ENCODE measurements at regions of chr16 and their contacts with region 1.

Region 1: DNA sequence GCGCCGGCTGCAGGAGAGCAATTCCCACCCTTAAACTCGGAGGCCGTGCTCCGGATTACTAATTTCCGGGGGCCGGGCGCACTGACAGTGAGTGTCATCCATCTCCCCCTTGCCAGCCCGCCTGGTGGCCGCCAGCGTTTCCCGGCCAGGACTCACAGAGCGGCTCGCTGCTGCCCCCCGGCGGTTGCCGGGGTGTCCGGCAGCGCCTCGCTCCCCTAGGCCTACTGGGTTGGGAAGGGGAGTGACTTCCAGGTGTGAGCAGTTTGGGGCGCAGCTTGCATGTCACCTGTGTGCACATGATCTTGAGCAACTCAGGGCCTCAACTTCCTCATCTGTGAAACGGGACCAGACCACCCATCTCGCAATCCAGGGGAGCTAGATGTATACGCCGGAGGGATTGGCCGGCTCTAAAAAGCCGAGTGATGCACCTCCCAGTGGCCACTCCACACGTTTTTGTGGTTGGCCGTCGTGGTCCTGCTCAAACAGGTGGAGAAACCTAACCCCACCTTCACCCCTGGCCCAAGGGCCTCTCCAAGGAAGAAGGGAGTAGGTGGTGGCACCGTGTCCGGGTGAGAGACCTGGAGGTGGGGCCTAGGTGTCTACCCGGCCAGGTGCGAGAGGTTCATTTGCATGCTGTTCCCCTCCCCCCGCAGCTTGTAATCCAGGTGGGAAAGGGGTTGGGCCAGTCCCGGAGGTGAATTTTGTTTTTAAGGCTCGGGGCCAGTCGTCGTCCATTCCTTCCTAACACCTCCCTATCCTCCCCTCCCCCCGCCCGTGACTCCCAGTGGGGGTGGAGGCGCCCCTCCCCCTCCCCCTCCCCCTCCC is 2.4 kb upstream of the GSE1 start:
- DNase-seq: peak; percentile 83
- ATAC-seq: peak; percentile 49
- H3K4me3 ChIP-seq: peak overlapping the region; percentile 85 to 91
- H3K27ac ChIP-seq: peak overlapping the region; percentile 98
- H3K4me1 ChIP-seq: peaks cover 20 to 52% of the 10 kb centered on the region in 2 experiments
- H3K27me3 ChIP-seq: no peaks in the 10 kb centered on the region
- CTCF ChIP-seq: peak in 2 of 3 experiments; percentile 99 to 100; a peak in 4 of 6 replicates
- POLR2A ChIP-seq: no peak
- RAD21 ChIP-seq: no peak

Region 2: DNA sequence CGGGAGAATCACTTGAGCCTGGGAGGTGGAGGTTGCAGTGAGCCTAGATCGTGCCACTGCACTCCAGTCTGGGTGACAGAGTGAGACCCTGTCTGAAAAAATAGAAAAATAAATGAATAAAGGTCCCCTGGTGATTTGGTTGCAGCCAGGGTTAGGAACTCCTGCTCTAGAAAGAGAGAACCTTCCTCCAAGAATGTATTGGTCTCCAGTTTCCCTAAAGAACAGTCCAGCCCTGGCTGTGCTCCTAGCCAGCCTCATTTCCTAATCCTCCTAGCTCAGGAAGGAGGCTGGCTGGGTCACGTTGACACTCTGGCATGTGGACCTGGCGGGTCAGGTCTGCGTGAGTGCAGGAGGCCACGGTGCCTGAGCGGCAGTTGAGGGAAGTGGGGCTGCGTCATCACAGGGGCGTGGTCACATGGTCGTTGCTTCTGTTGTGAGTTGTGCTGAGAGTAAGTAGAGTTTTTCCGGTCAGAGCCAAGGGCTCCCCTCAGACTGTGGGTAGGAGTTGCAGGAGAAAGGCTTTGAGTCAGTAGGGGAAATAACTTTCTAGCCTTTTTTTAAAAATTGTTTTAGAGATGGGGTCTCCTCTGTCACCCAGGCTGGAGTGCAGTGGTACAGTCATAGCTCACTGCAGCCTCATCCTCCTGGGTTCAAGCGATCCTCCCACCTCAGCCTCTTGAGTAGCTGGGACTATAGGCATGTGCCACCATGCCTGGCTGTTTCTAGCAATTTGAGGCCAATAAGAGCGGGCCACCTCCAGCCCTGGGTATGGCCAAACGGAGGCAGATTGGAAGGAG is 304.5 kb before region 1 on chr16:
- CTCF ChIA-PET with region 1: interaction called, 3 read pairs
- POLR2A ChIA-PET with region 1: interaction called, 3 read pairs
- RAD21 ChIA-PET with region 1: no interaction called
- intact Hi-C with region 1: loop called (anchors 2 kb)
- DNase-seq: peak; percentile 65
- ATAC-seq: peak; percentile 80
- H3K4me3 ChIP-seq: peak overlapping the region; percentile 15 to 28
- H3K27ac ChIP-seq: peak overlapping the region; percentile 29
- H3K4me1 ChIP-seq: peaks cover 45 to 55% of the 10 kb centered on the region in 2 experiments
- H3K27me3 ChIP-seq: no peaks in the 10 kb centered on the region
- CTCF ChIP-seq: no peak
- POLR2A ChIP-seq: peak; percentile 46
- RAD21 ChIP-seq: no peak

Region 3: DNA sequence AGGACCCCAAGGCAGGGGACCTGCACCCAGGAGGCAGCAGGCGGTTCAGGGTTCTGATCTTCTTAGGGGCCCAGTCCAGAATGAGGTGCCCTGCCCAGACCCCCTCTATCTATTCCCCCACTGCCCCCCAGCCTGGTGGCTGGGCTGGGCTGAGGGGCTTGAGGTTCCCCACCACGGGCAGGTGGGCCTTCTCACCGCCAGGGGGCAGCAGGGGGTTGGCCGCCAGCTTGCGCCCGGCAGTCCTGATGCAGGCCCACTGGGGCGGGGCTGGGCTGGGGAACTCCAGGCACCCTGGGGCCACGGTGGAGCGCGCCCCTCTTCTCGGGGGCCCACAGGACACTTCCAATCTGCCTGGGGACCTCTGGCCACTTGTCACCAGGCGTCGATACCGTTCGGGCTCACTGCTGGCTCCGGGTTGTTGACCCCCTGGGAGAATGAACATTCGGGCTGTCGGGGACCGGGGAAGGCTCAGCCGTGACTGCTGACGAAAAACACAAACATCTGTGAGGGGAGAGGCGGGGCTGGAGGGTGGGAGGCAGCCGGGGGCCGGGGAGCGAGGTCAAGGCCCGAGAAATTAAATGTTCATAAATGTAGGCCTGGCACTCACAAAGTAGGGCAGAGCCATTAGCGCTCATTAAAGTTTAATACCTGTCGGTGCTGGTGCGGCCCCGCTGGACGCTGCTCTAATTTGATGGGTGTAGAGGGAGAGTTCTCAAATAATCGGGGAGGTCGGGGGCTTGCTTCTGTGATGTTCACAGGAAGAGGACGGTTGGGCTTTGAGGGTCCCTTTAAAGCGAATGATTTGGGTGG is 216.8 kb before region 1 on chr16:
- CTCF ChIA-PET with region 1: interaction called, 24 read pairs
- POLR2A ChIA-PET with region 1: interaction called, 3 read pairs
- RAD21 ChIA-PET with region 1: interaction called, 3 to 4 read pairs
- intact Hi-C with region 1: loop called (anchors 1 kb)
- DNase-seq: no peak
- ATAC-seq: peak; percentile 54
- H3K4me3 ChIP-seq: no peak overlapping the region
- H3K27ac ChIP-seq: no peak overlapping the region; the same call in 1 of the 2 replicates
- H3K4me1 ChIP-seq: peaks cover 58 to 72% of the 10 kb centered on the region in 2 experiments
- H3K27me3 ChIP-seq: no peaks in the 10 kb centered on the region
- CTCF ChIP-seq: peak in 2 of 3 experiments; percentile 100; a peak in 4 of 6 replicates
- POLR2A ChIP-seq: no peak
- RAD21 ChIP-seq: no peak

Region 4: GRCh38 chr16:85437166-85438055 is 173.3 kb before region 1 on chr16:
- CTCF ChIA-PET with region 1: interaction called, 5 read pairs
- POLR2A ChIA-PET with region 1: no interaction called
- RAD21 ChIA-PET with region 1: no interaction called
- intact Hi-C with region 1: loop called (anchors 1 kb)
- DNase-seq: no peak
- ATAC-seq: no peak
- H3K4me3 ChIP-seq: no peak overlapping the region
- H3K27ac ChIP-seq: no peak overlapping the region
- H3K4me1 ChIP-seq: no peaks in the 10 kb centered on the region
- H3K27me3 ChIP-seq: no peaks in the 10 kb centered on the region
- CTCF ChIP-seq: no peak
- POLR2A ChIP-seq: no peak
- RAD21 ChIP-seq: no peak

Region 5: DNA sequence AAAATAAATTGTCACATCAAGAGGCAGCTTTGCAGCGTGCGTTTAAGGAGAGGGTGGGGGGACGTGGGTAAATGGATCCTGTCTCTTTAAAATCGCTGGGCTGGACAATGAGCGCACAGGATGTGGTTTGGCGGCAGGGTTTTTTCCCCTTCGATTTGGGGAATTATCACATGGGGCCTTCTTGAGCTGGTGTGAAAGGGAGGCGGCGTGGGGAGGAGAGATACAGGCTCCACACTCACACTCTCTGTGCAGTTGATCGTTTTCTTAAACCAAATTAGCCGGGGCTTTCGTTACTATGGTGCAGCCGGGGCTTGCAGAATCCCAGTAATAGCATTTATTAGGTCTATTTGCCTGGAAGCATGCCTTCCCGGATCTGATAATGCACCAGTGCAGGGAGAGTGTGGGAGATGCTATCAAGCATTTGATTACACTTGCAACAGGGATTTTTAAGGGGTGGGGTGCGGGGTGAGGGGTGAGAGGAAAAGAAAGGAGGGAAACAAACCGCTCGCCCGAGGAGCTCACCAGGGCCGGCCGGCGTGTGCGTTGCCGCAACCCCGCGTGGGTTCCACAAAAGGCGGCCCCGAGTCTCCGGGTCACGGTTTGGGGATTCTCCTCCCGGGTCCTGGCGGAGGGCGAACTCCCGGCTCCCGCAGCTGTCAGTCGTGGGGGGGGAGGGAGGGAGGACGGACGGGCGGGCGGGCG is 56.5 kb before region 1 on chr16:
- CTCF ChIA-PET with region 1: interaction called, 15 read pairs
- POLR2A ChIA-PET with region 1: interaction called, 11 read pairs
- RAD21 ChIA-PET with region 1: interaction called, 3 to 6 read pairs
- intact Hi-C with region 1: loop called (anchors 2 kb)
- DNase-seq: peak; percentile 80
- ATAC-seq: peak; percentile 56
- H3K4me3 ChIP-seq: peak overlapping the region; percentile 75 to 83
- H3K27ac ChIP-seq: peak overlapping the region; percentile 64
- H3K4me1 ChIP-seq: peaks cover 54 to 68% of the 10 kb centered on the region in 2 experiments
- H3K27me3 ChIP-seq: no peaks in the 10 kb centered on the region
- CTCF ChIP-seq: no peak
- POLR2A ChIP-seq: peak; percentile 42
- RAD21 ChIP-seq: no peak

Measured in HCT116 (cell line).